ENCODE measurements at regions of chr16 and their contacts with region 1.

Region 1: DNA sequence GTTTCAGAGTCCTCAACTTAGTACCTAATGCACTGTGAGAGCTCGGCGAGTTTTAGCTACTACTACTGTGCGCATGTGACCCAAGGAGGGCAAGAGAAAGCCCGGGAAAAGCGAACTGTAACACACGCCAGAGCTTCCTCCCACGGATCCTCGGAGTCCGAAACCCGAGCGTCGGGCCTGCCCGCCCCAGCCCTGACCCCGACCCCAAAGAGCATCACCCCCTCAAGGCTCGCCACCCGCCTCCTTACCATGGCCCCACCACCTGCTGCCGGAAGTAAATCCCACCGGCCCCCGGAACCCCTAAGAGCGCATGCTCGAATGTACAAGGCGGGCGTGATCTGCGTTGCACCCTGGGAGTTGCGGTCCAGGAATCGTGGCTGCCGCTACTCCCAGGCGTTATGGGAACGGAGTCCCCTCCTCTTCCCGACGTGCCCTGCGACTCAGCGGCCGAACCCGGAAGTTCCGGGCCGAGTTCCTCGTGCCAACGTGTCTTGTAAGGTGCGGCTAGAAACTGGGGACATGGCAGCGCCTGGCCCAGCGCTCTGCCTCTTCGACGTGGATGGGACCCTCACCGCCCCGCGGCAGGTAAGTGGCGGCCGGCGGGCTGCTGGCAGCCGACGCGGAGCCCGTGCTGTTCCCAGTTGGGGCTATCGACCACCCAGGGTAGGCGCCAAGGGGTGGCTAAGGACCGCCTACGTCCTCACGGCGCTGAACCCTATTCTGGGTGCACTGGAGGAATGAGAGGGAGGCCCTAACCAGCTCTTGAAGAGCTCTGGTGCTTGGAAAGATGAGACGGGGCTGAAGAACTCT is at the starts of genes PMM2 and TMEM186:
- DNase-seq: peak; percentile 91
- ATAC-seq: peak; percentile 96
- H3K4me3 Mint-ChIP-seq: peak within 1 kb of the TSS; percentile 98
- H3K27ac Mint-ChIP-seq: peak within 1 kb of the TSS; percentile 87
- H3K4me1 Mint-ChIP-seq: peaks cover 36% of the 10 kb centered on the region
- H3K27me3 Mint-ChIP-seq: no peaks in the 10 kb centered on the region
- CTCF ChIP-seq: no peak
- total RNA-seq, gene PMM2: 57.4 and 61.1 TPM in 2 replicates
- total RNA-seq, gene TMEM186: 10.6 and 13.0 TPM in 2 replicates

Region 2: GRCh38 chr16:8567750-8568617 is 229.6 kb before region 1 on chr16:
- CTCF ChIA-PET with region 1: interaction called, 9 read pairs
- POLR2A ChIA-PET with region 1: no interaction called
- intact Hi-C with region 1: loop called (anchors 1 kb)
- DNase-seq: peak; percentile 64
- ATAC-seq: peak; percentile 94
- H3K4me3 Mint-ChIP-seq: no peak overlapping the region
- H3K27ac Mint-ChIP-seq: no peak overlapping the region
- H3K4me1 Mint-ChIP-seq: peaks cover 3% of the 10 kb centered on the region
- H3K27me3 Mint-ChIP-seq: peaks cover 8% of the 10 kb centered on the region
- CTCF ChIP-seq: peak; percentile 88

Region 3: DNA sequence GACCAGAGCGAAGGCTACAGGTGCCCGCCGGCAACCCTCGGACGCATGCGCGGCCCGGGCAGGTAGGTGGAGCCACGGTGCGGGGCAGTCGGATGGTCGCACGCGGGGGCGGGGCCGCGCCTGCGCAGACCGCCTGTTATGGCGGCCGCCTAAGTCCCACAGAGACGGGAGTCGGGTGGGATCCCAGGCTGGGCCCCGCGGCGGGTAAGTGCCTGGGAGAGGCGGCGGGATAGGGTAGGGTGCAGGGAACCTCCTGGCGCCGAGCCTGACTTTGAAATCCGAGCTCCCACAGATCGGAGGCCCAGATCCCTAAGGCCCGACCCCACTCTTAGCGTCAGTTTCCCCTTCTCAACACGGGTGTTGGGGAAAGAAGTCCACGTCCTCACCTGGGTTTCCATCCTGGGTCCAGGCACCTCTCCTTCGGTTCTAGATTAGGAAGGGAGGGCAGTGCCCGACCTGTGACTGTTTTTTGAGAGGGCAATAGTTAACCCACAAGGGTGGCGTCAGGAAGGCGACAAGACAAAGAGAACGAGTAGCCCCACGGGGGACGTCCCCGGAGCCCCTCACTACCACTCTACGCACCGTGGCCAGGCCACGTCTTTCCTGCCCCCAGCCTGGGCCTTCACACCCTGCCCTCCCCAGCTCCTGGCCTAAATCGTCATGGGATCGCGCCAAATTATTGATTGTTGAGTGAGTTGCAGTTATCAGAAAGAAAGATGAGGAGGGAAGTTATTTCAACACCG is 175.8 kb before region 1 on chr16 and contains the start of gene METTL22:
- CTCF ChIA-PET with region 1: no interaction called
- POLR2A ChIA-PET with region 1: interaction called, 8 read pairs
- intact Hi-C with region 1: loop called (anchors 1 kb)
- DNase-seq: peak; percentile 96
- ATAC-seq: peak; percentile 99
- H3K4me3 Mint-ChIP-seq: peak within 1 kb of the TSS; percentile 95
- H3K27ac Mint-ChIP-seq: peak within 1 kb of the TSS; percentile 79
- H3K4me1 Mint-ChIP-seq: peaks cover 13% of the 10 kb centered on the region
- H3K27me3 Mint-ChIP-seq: no peaks in the 10 kb centered on the region
- CTCF ChIP-seq: no peak
- total RNA-seq, gene METTL22: 36.4 and 49.6 TPM in 2 replicates

Region 4: GRCh38 chr16:8674413-8675022 is 123.1 kb before region 1 on chr16 and contains the start of gene ABAT:
- CTCF ChIA-PET with region 1: no interaction called
- POLR2A ChIA-PET with region 1: interaction called, 3 read pairs
- intact Hi-C with region 1: loop called (anchors 1 kb)
- DNase-seq: peak; percentile 87
- ATAC-seq: peak; percentile 99
- H3K4me3 Mint-ChIP-seq: peak within 1 kb of the TSS; percentile 90
- H3K27ac Mint-ChIP-seq: peak within 1 kb of the TSS; percentile 84
- H3K4me1 Mint-ChIP-seq: peaks cover 23% of the 10 kb centered on the region
- H3K27me3 Mint-ChIP-seq: no peaks in the 10 kb centered on the region
- CTCF ChIP-seq: no peak
- total RNA-seq, gene ABAT: 12.6 and 13.2 TPM in 2 replicates

Region 5: DNA sequence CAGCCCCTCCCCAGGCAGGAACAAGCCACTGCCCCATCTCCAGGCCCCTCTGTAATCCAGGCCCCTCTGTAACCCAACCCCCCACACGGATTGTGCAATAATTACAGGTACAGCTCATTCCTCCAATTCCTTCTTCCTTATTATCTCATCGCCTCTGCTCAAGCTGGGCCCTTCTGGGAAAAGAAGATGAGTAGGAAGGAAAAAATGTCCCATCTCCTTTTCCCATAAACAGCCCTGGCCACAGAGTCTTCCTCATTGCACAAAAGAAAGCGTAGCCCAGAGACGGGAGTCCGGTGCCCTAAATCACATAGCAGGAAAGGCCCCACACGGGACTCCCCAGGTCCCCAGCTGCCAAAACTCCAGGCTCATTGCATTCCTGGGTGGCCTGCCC is 80.9 kb after region 1 on chr16:
- CTCF ChIA-PET with region 1: interaction called, 8 read pairs
- POLR2A ChIA-PET with region 1: no interaction called
- intact Hi-C with region 1: loop called (anchors 1 kb)
- DNase-seq: no peak
- ATAC-seq: no peak
- H3K4me3 Mint-ChIP-seq: no peak overlapping the region
- H3K27ac Mint-ChIP-seq: no peak overlapping the region
- H3K4me1 Mint-ChIP-seq: peaks cover 6% of the 10 kb centered on the region
- H3K27me3 Mint-ChIP-seq: no peaks in the 10 kb centered on the region
- CTCF ChIP-seq: no peak

Region 6: DNA sequence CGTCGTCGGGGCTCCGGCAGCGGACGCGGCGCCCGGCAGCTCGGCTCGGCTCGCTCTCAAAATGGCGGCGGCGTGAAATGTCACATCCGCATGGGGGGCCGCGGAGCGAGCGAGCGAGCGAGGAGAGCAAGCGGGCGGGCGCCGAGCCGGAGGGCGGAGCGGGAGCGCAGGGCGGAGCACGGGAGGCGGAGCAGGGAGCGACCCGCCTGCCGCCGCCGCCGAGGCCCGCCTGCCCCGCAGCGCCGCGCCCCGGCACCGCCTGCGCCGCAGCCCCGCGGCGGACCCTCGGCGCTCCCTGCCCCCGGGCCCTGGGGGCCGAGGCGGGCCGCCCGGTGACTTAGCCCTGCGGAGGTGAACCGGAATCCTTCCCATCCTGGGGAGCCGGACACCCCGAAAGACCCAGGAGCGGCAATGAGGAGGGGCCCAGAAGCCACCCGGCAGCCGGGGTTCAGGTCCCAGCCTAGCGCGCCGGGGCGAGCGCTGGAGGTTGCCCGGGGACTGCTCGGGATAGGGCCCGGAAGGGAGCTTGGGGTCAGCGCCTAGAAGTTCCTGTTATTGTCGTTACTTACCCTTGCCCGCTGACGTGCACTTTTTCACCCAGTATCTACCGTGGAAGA is 166.4 kb after region 1 on chr16 and contains the start of gene USP7:
- CTCF ChIA-PET with region 1: no interaction called
- POLR2A ChIA-PET with region 1: interaction called, 3 read pairs
- intact Hi-C with region 1: loop called (anchors 1 kb)
- DNase-seq: peak; percentile 90
- ATAC-seq: peak; percentile 90
- H3K4me3 Mint-ChIP-seq: peak within 1 kb of the TSS; percentile 81
- H3K27ac Mint-ChIP-seq: peak within 1 kb of the TSS; percentile 93
- H3K4me1 Mint-ChIP-seq: peaks cover 35% of the 10 kb centered on the region
- H3K27me3 Mint-ChIP-seq: no peaks in the 10 kb centered on the region
- CTCF ChIP-seq: no peak
- total RNA-seq, gene USP7: 173 and 193 TPM in 2 replicates